CD4-positive, alpha-beta T cell (primary cell): ENCODE measurements at regions of chr10 and their contacts with region 1.

Region 1: GRCh38 chr10:121033366-121033765 is 182.2 kb downstream of the WDR11 start:
- DNase-seq: no peak
- ATAC-seq: no peak
- H3K4me3 ChIP-seq: no peak overlapping the region
- H3K4me3 Mint-ChIP-seq: no peak overlapping the region
- H3K27ac ChIP-seq: no peak overlapping the region
- H3K27ac Mint-ChIP-seq: no peak overlapping the region
- H3K4me1 ChIP-seq: no peaks in the 10 kb centered on the region
- H3K4me1 Mint-ChIP-seq: no peaks in the 10 kb centered on the region
- H3K27me3 ChIP-seq: no peaks in the 10 kb centered on the region
- H3K27me3 Mint-ChIP-seq: peaks cover 5% of the 10 kb centered on the region
- CTCF ChIP-seq: no peak

Region 2: DNA sequence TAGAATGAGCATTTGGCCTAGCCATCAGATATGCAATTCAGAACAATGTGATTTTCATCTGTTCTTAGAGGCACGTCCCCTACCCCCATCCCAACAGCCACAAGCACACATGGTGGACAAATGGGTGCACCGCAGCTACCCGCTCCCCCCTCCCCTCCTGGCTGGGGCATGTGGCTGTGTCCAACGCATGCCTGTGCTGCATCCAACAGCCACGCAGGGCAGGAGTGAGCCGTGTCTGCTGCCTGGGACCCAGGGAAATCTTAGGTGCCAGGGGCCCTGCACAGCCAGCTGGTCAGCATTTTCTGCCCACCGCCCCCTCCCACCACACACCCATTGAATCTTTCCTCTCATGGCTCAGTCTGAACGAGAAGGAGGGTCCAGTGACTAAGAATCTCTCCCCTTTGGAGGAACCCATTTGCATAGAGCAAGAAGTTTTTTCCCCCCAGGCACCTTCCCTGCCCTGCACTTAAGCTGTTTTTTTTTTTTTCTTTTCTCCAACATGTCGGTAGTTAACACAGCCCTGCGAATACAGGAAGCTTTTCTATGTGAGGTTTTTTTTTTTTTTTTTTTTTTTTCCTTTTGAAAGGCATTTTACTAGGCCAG is 43.3 kb before region 1 on chr10:
- CTCF ChIA-PET with region 1: no interaction called
- POLR2A ChIA-PET with region 1: no interaction called
- intact Hi-C with region 1: no loop called
- DNase-seq: no peak
- ATAC-seq: no peak
- H3K4me3 ChIP-seq: no peak overlapping the region
- H3K4me3 Mint-ChIP-seq: no peak overlapping the region
- H3K27ac ChIP-seq: no peak overlapping the region
- H3K27ac Mint-ChIP-seq: no peak overlapping the region
- H3K4me1 ChIP-seq: no peaks in the 10 kb centered on the region
- H3K4me1 Mint-ChIP-seq: no peaks in the 10 kb centered on the region
- H3K27me3 ChIP-seq: peaks cover 0 to 3% of the 10 kb centered on the region in 2 experiments
- H3K27me3 Mint-ChIP-seq: peaks cover 9% of the 10 kb centered on the region
- CTCF ChIP-seq: no peak

Region 3: DNA sequence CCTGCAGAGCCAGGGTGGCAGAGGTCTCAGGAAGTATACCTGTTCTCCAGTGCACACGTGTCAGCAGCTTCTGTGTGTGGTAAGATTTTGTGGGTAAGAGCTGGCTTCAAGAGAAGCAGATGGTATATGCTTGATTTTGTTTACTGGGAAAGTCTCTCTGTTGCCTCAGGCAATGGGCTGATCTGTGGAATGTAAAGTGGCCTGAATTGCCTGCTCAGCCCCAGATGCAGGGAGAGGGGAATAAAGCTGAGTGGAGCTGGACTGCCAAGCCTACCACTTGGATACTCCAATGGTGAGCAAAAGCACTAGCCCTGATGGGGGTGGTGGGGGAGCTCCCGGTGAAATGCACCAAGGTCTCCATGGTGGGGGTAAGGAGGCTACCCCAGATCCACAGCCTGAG is 26.1 kb before region 1 on chr10:
- CTCF ChIA-PET with region 1: no interaction called
- POLR2A ChIA-PET with region 1: no interaction called
- intact Hi-C with region 1: loop called (anchors 1 kb)
- DNase-seq: no peak
- ATAC-seq: no peak
- H3K4me3 ChIP-seq: no peak overlapping the region
- H3K4me3 Mint-ChIP-seq: no peak overlapping the region
- H3K27ac ChIP-seq: no peak overlapping the region
- H3K27ac Mint-ChIP-seq: no peak overlapping the region
- H3K4me1 ChIP-seq: no peaks in the 10 kb centered on the region
- H3K4me1 Mint-ChIP-seq: no peaks in the 10 kb centered on the region
- H3K27me3 ChIP-seq: peaks cover 0 to 3% of the 10 kb centered on the region in 2 experiments
- H3K27me3 Mint-ChIP-seq: no peaks in the 10 kb centered on the region
- CTCF ChIP-seq: no peak